ENCODE measurements at regions of chr16 and their contacts with region 1.

Region 1: DNA sequence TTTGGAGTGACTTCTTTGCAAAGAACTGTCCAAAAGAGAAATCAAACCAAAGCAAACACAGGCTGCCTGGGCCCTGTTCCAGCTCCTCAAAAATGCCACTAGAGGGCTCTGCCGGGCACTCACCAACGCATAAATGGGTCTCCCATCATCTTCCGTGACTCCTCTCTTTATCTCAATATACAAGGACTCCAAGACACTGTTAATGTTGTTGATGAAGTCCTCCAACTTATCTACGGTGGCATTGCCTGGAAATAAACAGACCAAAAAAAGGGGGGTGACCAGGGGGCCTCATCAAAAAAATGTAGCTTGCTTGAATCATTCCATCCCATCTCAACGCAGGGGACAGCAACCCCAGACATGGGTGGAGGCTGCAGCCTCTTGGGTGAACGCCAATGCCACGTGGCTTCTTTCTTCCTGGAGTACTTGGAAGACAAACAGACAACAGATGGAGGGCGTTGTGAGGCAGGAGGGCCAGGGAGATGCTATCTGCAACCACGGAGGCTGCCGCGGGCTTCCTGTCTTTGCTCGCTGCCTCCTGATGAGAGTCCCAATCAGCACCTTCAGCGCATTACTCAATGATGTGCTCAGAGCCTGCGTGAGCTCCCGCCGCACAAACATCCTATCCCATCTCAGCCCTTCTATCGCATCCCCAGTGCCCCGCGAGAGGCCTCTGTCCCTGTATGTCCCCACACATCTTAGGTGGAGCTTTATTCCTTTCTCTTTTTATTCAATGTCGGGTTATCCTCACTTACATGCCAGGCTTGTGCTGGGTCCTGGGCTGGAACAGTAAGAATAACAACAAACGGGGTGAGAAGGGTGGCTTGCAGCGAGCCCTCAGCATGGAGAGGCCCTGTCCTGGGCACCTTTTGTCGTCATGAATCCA is 32.0 kb downstream of the KDM8 start:
- DNase-seq: peak; percentile 78 to 98 (median 93)
- ATAC-seq: peak; percentile 64
- H3K4me3 ChIP-seq: peak overlapping the region; percentile 14 to 30
- H3K4me3 Mint-ChIP-seq: peak overlapping the region; percentile 78
- H3K27ac ChIP-seq: peak overlapping the region; percentile 90 to 97
- H3K27ac Mint-ChIP-seq: peak overlapping the region; percentile 98
- H3K4me1 ChIP-seq: peaks cover 84% of the 10 kb centered on the region
- H3K4me1 Mint-ChIP-seq: peaks cover 92% of the 10 kb centered on the region
- H3K27me3 ChIP-seq: no peaks in the 10 kb centered on the region
- H3K27me3 Mint-ChIP-seq: no peaks in the 10 kb centered on the region
- CTCF ChIP-seq: peak; percentile 76

Region 2: DNA sequence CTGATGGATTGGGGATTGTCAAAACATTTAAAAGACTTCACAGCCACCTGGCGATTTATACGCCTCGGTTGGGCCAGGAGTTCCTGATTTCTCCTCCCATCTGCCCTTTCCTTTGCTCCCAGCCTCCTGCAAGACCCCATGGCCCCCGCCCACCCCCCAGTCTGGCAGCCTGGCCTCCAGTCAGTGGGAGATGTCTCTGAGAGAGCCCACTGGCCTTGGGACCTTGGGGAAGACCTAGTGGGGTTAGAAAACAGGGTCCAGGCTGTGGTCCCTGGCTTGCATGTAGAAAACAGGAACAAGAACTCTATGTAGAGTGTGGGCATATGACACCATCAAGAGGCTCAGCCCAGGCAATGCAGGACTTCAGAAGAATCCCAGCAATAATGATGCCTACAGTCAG is 377.9 kb before region 1 on chr16:
- CTCF ChIA-PET with region 1: no interaction called
- POLR2A ChIA-PET with region 1: no interaction called
- intact Hi-C with region 1: no loop called
- DNase-seq: no peak
- ATAC-seq: no peak
- H3K4me3 ChIP-seq: no peak overlapping the region
- H3K4me3 Mint-ChIP-seq: no peak overlapping the region
- H3K27ac ChIP-seq: no peak overlapping the region
- H3K27ac Mint-ChIP-seq: no peak overlapping the region
- H3K4me1 ChIP-seq: no peaks in the 10 kb centered on the region
- H3K4me1 Mint-ChIP-seq: no peaks in the 10 kb centered on the region
- H3K27me3 ChIP-seq: no peaks in the 10 kb centered on the region
- H3K27me3 Mint-ChIP-seq: peaks cover 9% of the 10 kb centered on the region
- CTCF ChIP-seq: no peak

Region 3: GRCh38 chr16:27073682-27074081 is 161.6 kb before region 1 on chr16:
- CTCF ChIA-PET with region 1: no interaction called
- POLR2A ChIA-PET with region 1: no interaction called
- intact Hi-C with region 1: no loop called
- DNase-seq: no peak
- ATAC-seq: no peak
- H3K4me3 ChIP-seq: no peak overlapping the region
- H3K4me3 Mint-ChIP-seq: no peak overlapping the region
- H3K27ac ChIP-seq: no peak overlapping the region
- H3K27ac Mint-ChIP-seq: no peak overlapping the region
- H3K4me1 ChIP-seq: no peaks in the 10 kb centered on the region
- H3K4me1 Mint-ChIP-seq: no peaks in the 10 kb centered on the region
- H3K27me3 ChIP-seq: peaks cover 2 to 4% of the 10 kb centered on the region in 2 experiments
- H3K27me3 Mint-ChIP-seq: peaks cover 15% of the 10 kb centered on the region
- CTCF ChIP-seq: no peak

Region 4: DNA sequence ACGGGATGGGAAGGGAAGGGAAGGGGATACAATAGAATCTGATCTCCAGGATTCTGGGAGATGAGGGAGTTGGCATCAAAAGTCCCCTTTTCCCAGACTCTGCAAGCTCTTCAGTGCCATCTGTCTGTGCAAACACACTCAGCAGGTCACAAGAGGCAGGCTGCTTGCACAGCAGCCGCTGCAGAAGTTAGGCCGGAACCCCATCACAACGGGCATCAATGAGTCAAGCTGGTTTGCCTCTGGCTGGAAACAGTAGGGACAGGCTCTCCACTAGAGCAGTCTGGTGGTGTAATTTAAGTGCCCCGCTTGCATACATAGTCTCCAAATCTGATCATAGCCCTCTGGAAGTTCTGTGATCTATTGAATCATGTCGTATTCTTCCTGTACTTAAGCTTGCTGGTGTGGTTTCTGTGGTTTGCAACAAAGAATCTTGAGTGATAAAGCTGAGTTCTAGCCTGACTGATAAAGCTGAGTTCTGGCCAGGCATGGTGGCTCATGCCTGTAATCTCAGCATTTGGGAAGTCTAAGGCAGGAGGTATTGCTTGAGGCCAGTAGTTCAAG is 65.7 kb before region 1 on chr16:
- CTCF ChIA-PET with region 1: interaction called, 9 read pairs
- POLR2A ChIA-PET with region 1: interaction called, 5 read pairs
- intact Hi-C with region 1: loop called in 1 of 2 experiments (anchors 1 kb)
- DNase-seq: peak; percentile 54 to 93 (median 77)
- ATAC-seq: peak; percentile 87
- H3K4me3 ChIP-seq: no peak overlapping the region
- H3K4me3 Mint-ChIP-seq: peak overlapping the region; percentile 51
- H3K27ac ChIP-seq: peak overlapping the region in 1 of 2 experiments; percentile 53
- H3K27ac Mint-ChIP-seq: peak overlapping the region; percentile 89
- H3K4me1 ChIP-seq: peaks cover 63% of the 10 kb centered on the region
- H3K4me1 Mint-ChIP-seq: peaks cover 64% of the 10 kb centered on the region
- H3K27me3 ChIP-seq: no peaks in the 10 kb centered on the region
- H3K27me3 Mint-ChIP-seq: no peaks in the 10 kb centered on the region
- CTCF ChIP-seq: no peak

Region 5: GRCh38 chr16:27208796-27209195 is 26.5 kb before region 1 on chr16:
- CTCF ChIA-PET with region 1: interaction called, 25 read pairs
- POLR2A ChIA-PET with region 1: interaction called, 19 read pairs
- intact Hi-C with region 1: loop called (anchors 1 to 2 kb)
- DNase-seq: no peak
- ATAC-seq: no peak
- H3K4me3 ChIP-seq: no peak overlapping the region
- H3K4me3 Mint-ChIP-seq: no peak overlapping the region
- H3K27ac ChIP-seq: no peak overlapping the region
- H3K27ac Mint-ChIP-seq: no peak overlapping the region
- H3K4me1 ChIP-seq: peaks cover 31% of the 10 kb centered on the region
- H3K4me1 Mint-ChIP-seq: peaks cover 27% of the 10 kb centered on the region
- H3K27me3 ChIP-seq: no peaks in the 10 kb centered on the region
- H3K27me3 Mint-ChIP-seq: no peaks in the 10 kb centered on the region
- CTCF ChIP-seq: no peak

Region 6: GRCh38 chr16:27268376-27269299 is 33.3 kb after region 1 on chr16 and contains the start of gene NSMCE1:
- CTCF ChIA-PET with region 1: interaction called, 8 read pairs
- POLR2A ChIA-PET with region 1: interaction called, 4 read pairs
- intact Hi-C with region 1: loop called (anchors 1 kb)
- DNase-seq: peak; percentile 92 to 98 (median 96)
- ATAC-seq: peak; percentile 98
- H3K4me3 ChIP-seq: peak within 1 kb of the TSS; percentile 65 to 90
- H3K4me3 Mint-ChIP-seq: peak within 1 kb of the TSS; percentile 95
- H3K27ac ChIP-seq: peak within 1 kb of the TSS; percentile 93 to 97
- H3K27ac Mint-ChIP-seq: peak within 1 kb of the TSS; percentile 99
- H3K4me1 ChIP-seq: peaks cover 35% of the 10 kb centered on the region
- H3K4me1 Mint-ChIP-seq: peaks cover 54% of the 10 kb centered on the region
- H3K27me3 ChIP-seq: no peaks in the 10 kb centered on the region
- H3K27me3 Mint-ChIP-seq: no peaks in the 10 kb centered on the region
- CTCF ChIP-seq: no peak
- total RNA-seq, gene NSMCE1: 29.6 to 30.1 TPM

Region 7: GRCh38 chr16:27326738-27327585 is 91.7 kb after region 1 on chr16:
- CTCF ChIA-PET with region 1: interaction called, 15 read pairs
- POLR2A ChIA-PET with region 1: interaction called, 3 read pairs
- intact Hi-C with region 1: no loop called
- DNase-seq: peak in 7 of 9 experiments; percentile 25 to 60 (median 56)
- ATAC-seq: peak; percentile 69
- H3K4me3 ChIP-seq: peak overlapping the region in 1 of 2 experiments; percentile 34
- H3K4me3 Mint-ChIP-seq: peak overlapping the region; percentile 43
- H3K27ac ChIP-seq: no peak overlapping the region
- H3K27ac Mint-ChIP-seq: peak overlapping the region; percentile 69
- H3K4me1 ChIP-seq: peaks cover 52% of the 10 kb centered on the region
- H3K4me1 Mint-ChIP-seq: peaks cover 69% of the 10 kb centered on the region
- H3K27me3 ChIP-seq: no peaks in the 10 kb centered on the region
- H3K27me3 Mint-ChIP-seq: no peaks in the 10 kb centered on the region
- CTCF ChIP-seq: no peak

Region 8: DNA sequence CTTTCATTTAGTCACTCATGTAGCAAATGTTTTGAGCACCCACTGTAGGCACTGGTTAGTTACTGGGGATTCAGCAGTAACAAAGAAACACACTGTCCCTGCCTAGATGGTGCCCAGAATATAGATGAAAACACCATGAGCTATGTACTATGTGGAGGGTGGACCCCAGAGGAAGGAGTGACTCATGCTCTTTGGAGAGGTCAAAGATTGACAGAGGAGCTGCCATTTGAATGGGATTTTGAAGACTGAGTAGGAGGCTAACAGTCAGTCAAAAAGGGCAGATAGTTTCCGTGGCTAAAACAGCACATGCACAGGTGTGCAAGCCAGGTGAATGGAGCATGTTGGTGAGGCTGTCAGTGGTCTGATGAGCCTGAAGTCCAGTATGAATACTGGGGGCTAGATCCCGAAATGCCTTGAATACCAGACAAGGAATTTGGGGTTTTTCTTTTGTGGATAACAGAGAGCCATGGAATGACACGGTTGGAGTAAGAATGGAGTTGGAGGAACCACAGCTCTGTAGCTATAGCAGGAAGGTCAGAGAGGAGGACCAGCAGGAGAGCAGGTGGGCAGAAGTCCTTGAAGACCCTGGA is 172.8 kb after region 1 on chr16:
- CTCF ChIA-PET with region 1: interaction called, 15 read pairs
- POLR2A ChIA-PET with region 1: interaction called, 20 read pairs
- intact Hi-C with region 1: no loop called
- DNase-seq: peak in 4 of 9 experiments; percentile 51 to 73 (median 56)
- ATAC-seq: peak; percentile 52
- H3K4me3 ChIP-seq: peak overlapping the region; percentile 2 to 11
- H3K4me3 Mint-ChIP-seq: peak overlapping the region; percentile 97
- H3K27ac ChIP-seq: peak overlapping the region; percentile 17 to 66
- H3K27ac Mint-ChIP-seq: peak overlapping the region; percentile 91
- H3K4me1 ChIP-seq: peaks cover 63% of the 10 kb centered on the region
- H3K4me1 Mint-ChIP-seq: peaks cover 85% of the 10 kb centered on the region
- H3K27me3 ChIP-seq: no peaks in the 10 kb centered on the region
- H3K27me3 Mint-ChIP-seq: no peaks in the 10 kb centered on the region
- CTCF ChIP-seq: no peak

Region 9: DNA sequence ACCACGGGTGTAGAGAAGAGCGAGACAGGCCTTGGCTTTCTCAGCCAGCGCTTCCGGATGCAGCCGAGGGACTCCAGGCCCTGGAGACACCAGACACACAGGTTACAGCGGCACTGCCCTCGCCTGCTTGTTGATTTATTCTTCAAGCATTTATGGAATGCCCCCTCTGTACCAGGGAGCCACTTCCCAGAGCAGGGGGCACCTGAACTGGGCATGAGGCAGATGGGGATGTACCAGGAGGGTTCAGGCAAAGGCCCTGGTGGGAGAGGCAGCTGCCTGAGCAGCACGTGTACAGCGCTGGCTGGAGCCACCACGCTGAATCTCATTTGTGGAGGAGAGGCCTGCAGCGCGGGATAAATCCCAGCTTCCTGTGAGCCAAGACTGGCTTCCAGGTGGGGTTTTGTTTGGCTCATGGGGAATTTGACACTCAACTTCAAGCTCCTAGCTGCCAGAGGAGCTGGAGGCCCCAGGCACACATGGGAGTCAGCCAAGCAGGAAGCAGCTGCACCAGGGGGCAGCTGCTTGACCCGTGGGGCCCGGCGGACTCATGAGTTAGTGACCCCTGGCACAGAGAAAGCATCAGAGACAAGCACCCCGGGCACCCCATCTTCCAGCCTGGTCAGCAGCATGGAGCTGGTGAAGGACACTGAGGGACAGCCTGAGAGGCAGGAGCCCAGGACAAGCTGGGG is 226.3 kb after region 1 on chr16:
- CTCF ChIA-PET with region 1: interaction called, 18 read pairs
- POLR2A ChIA-PET with region 1: interaction called, 33 read pairs
- intact Hi-C with region 1: loop called (anchors 1 kb)
- DNase-seq: no peak
- ATAC-seq: no peak
- H3K4me3 ChIP-seq: no peak overlapping the region
- H3K4me3 Mint-ChIP-seq: peak overlapping the region; percentile 32
- H3K27ac ChIP-seq: no peak overlapping the region
- H3K27ac Mint-ChIP-seq: peak overlapping the region; percentile 69
- H3K4me1 ChIP-seq: peaks cover 76% of the 10 kb centered on the region
- H3K4me1 Mint-ChIP-seq: peaks cover 79% of the 10 kb centered on the region
- H3K27me3 ChIP-seq: no peaks in the 10 kb centered on the region
- H3K27me3 Mint-ChIP-seq: no peaks in the 10 kb centered on the region
- CTCF ChIP-seq: no peak

Measured in CD8-positive, alpha-beta T cell (primary cell).